Ovary (tissue), 10 donors: ENCODE measurements at regions of chr2 and their contacts with region 1.

Region 1: GRCh38 chr2:225735844-225736243 is 336.3 kb downstream of the NYAP2 start:
- DNase-seq: no peak
- H3K4me3 ChIP-seq: no peak overlapping the region
- H3K27ac ChIP-seq: no peak overlapping the region
- H3K4me1 ChIP-seq: peaks cover 10% of the 10 kb centered on the region
- H3K27me3 ChIP-seq: no peaks in the 10 kb centered on the region
- CTCF ChIP-seq: no peak
- EP300 ChIP-seq: no peak
- POLR2A ChIP-seq: no peak

Region 2: DNA sequence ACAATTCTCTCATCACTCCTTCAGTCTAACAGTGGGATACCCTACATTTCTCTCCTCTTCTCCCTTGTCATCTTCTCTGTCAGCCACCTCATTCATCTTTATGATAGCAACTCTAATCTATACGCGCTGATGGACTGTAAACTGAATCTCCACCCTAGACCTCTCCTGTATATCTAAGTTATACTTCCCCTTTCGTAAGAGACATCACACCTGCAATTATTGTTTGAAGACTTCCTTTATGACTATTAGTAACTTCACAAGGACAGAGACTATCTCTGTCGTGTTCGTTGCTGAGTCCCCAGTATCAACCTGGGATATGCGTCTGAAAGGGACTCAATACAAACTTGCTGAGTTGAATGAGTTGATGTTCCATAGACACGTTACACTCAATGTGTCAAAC is 800.6 kb after region 1 on chr2:
- intact Hi-C with region 1: loop called in 1 of 4 experiments (anchors 5 kb)
- DNase-seq: no peak
- H3K4me3 ChIP-seq: no peak overlapping the region
- H3K27ac ChIP-seq: no peak overlapping the region
- H3K4me1 ChIP-seq: no peaks in the 10 kb centered on the region
- H3K27me3 ChIP-seq: no peaks in the 10 kb centered on the region
- CTCF ChIP-seq: no peak
- EP300 ChIP-seq: no peak
- POLR2A ChIP-seq: no peak

Region 3: GRCh38 chr2:226661789-226662545 is 926.1 kb after region 1 on chr2:
- intact Hi-C with region 1: no loop called
- DNase-seq: peak in 3 of 5 donors; percentile 38 to 54 (median 51)
- H3K4me3 ChIP-seq: no peak overlapping the region
- H3K27ac ChIP-seq: no peak overlapping the region
- H3K4me1 ChIP-seq: peaks cover 7% of the 10 kb centered on the region
- H3K27me3 ChIP-seq: no peaks in the 10 kb centered on the region
- CTCF ChIP-seq: no peak
- EP300 ChIP-seq: no peak
- POLR2A ChIP-seq: no peak